Naive thymus-derived CD4-positive, alpha-beta T cell (primary cell): ENCODE measurements at regions of chr19 and their contacts with region 1.

Region 1: GRCh38 chr19:29610563-29611271 is 4.6 kb downstream of the POP4 start:
- DNase-seq: peak; percentile 61 to 85 (median 79)
- ATAC-seq: peak; percentile 82
- H3K4me3 ChIP-seq: no peak overlapping the region
- H3K4me3 Mint-ChIP-seq: peak overlapping the region in 1 of 10 donors; percentile 10
- H3K27ac ChIP-seq: peak overlapping the region; percentile 35
- H3K27ac Mint-ChIP-seq: peak overlapping the region in 8 of 9 donors; percentile 6 to 77 (median 44)
- H3K4me1 ChIP-seq: peaks cover 14 to 16% of the 10 kb centered on the region in 2 donors
- H3K4me1 Mint-ChIP-seq: peaks cover 16 to 39% (median 29%) of the 10 kb centered on the region in 7 donors
- H3K27me3 ChIP-seq: no peaks in the 10 kb centered on the region
- H3K27me3 Mint-ChIP-seq: peaks cover 0 to 4% (median 0%) of the 10 kb centered on the region in 5 donors

Region 2: DNA sequence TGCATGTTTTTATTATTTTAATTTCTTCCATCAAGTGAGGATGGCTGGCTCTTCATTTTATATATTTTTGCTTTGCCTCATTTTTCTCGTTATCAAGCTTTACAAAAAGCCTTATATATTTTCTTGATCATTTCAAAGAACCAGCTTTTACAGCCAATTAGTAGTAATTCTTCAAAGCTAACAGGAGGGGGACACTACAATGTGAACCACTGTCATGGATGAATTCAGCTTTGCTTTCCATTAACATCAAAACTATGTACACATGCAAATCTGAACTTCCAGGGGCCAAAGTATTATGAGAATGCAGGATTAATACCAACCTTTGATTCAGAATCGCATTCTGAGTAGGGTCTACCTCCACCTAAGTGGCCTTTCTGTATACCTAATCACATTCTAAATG is 408.9 kb before region 1 on chr19:
- CTCF ChIA-PET with region 1: no interaction called
- POLR2A ChIA-PET with region 1: no interaction called
- intact Hi-C with region 1: no loop called
- DNase-seq: no peak
- ATAC-seq: no peak
- H3K4me3 ChIP-seq: no peak overlapping the region
- H3K4me3 Mint-ChIP-seq: no peak overlapping the region
- H3K27ac ChIP-seq: no peak overlapping the region
- H3K27ac Mint-ChIP-seq: no peak overlapping the region
- H3K4me1 ChIP-seq: no peaks in the 10 kb centered on the region
- H3K4me1 Mint-ChIP-seq: peaks cover 4 to 26% (median 20%) of the 10 kb centered on the region in 7 donors
- H3K27me3 ChIP-seq: no peaks in the 10 kb centered on the region
- H3K27me3 Mint-ChIP-seq: no peaks in the 10 kb centered on the region

Region 3: DNA sequence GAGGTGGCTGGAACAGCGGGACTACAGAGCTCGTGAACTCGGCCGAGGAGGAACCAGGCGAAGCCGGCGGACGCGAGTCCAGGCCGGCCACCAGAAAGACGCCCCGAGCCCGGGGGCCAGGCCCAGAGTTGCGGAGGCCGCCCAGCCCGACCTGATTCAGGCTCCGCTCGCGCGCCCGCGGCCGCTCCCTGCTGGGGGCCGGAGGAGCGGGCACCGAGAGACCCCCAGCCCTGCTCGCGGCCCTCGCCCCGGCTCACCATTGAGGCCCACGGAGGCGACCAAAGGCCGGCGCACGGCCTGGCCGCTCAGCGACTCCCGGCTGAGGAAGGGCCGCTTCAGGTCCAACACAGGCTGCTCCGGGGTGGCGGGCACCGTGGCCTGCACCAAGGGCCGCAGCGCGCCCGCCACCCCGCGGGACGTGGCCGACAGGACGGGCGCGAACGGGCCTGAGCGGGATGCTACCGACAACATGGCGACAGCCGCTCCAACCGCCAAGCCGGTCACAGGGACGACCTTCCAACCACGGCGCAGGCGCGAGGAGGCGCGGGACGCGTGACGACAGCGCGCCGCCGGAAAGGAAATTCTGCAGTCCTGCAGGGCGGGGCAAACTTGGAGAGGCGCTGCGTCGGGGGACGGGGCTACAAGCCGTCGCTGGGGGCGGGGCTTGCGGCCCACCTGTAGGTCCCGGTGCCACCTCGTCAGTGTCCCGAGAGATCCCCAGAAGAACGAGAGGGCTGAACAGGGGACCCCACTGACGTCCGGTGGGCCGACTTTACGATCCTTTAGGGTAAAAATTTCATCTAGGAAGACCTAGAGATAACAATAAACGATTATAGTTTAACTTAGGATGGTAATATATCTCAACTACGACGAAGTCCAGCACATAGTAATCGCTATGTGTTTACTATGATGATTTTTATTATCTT is 397.8 kb before region 1 on chr19 and contains the start of gene UQCRFS1:
- CTCF ChIA-PET with region 1: no interaction called
- POLR2A ChIA-PET with region 1: interaction called, 3 read pairs
- intact Hi-C with region 1: loop called (anchors 1 to 2 kb)
- DNase-seq: peak; percentile 92 to 96 (median 95)
- ATAC-seq: peak; percentile 97
- H3K4me3 ChIP-seq: peak within 1 kb of the TSS; percentile 94
- H3K4me3 Mint-ChIP-seq: peak within 1 kb of the TSS; percentile 89 to 99 (median 96)
- H3K27ac ChIP-seq: peak within 1 kb of the TSS; percentile 96
- H3K27ac Mint-ChIP-seq: peak within 1 kb of the TSS; percentile 88 to 99 (median 98)
- H3K4me1 ChIP-seq: peaks cover 9 to 34% of the 10 kb centered on the region in 2 donors
- H3K4me1 Mint-ChIP-seq: peaks cover 32 to 54% (median 50%) of the 10 kb centered on the region in 7 donors
- H3K27me3 ChIP-seq: no peaks in the 10 kb centered on the region
- H3K27me3 Mint-ChIP-seq: peaks cover 0 to 12% (median 4%) of the 10 kb centered on the region in 5 donors
- total RNA-seq, gene UQCRFS1: 16.1 to 28.3 (median 23.9) TPM

Region 4: DNA sequence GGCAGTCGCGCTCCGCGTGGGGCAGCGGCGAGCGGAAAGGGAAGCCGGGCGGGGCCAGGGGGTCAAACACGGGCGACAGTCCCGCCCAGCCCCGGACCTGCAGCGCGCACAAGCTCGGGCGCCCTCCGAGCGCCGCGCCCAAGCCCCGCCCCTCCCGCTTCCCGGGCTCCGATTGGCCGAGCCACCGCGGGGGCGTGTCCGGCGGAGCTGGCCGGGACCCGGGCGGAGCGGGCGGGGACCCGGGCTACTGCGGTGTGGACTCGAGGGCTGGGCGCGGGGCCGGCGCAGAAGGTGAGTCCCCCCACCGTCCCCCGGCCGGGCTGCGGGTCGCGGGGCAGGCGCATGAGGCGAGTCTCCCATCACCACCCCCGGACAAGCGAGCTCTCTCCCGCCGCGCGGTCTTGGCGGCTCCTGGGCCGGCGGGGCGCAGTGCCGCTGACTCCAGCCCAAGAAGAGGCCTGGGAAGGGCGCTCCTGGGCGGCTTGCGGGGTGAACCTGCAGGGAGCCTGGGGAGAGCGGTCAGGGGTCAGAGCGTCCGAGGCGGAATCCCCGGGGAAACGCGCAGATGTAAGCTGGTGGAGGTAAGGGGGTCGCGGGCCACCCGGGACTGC is 54.6 kb after region 1 on chr19 and contains the start of gene PLEKHF1:
- CTCF ChIA-PET with region 1: interaction called, 62 read pairs
- POLR2A ChIA-PET with region 1: interaction called, 87 read pairs
- intact Hi-C with region 1: loop called (anchors 1 kb)
- DNase-seq: peak; percentile 66 to 99 (median 79)
- ATAC-seq: peak; percentile 86
- H3K4me3 ChIP-seq: peak within 1 kb of the TSS; percentile 62
- H3K4me3 Mint-ChIP-seq: peak within 1 kb of the TSS; percentile 89 to 98 (median 93)
- H3K27ac ChIP-seq: peak within 1 kb of the TSS; percentile 94
- H3K27ac Mint-ChIP-seq: peak within 1 kb of the TSS; percentile 88 to 100 (median 97)
- H3K4me1 ChIP-seq: peaks cover 33 to 55% of the 10 kb centered on the region in 2 donors
- H3K4me1 Mint-ChIP-seq: peaks cover 36 to 80% (median 71%) of the 10 kb centered on the region in 7 donors
- H3K27me3 ChIP-seq: no peaks in the 10 kb centered on the region
- H3K27me3 Mint-ChIP-seq: no peaks in the 10 kb centered on the region
- total RNA-seq, gene PLEKHF1: 11.1 to 47.2 (median 17.5) TPM

Region 5: GRCh38 chr19:29687244-29687896 is 76.7 kb after region 1 on chr19:
- CTCF ChIA-PET with region 1: interaction called, 115 read pairs
- POLR2A ChIA-PET with region 1: interaction called, 52 read pairs
- intact Hi-C with region 1: loop called (anchors 1 kb)
- DNase-seq: peak in 1 of 9 donors; percentile 63
- ATAC-seq: no peak
- H3K4me3 ChIP-seq: no peak overlapping the region
- H3K4me3 Mint-ChIP-seq: no peak overlapping the region
- H3K27ac ChIP-seq: no peak overlapping the region
- H3K27ac Mint-ChIP-seq: peak overlapping the region in 2 of 9 donors; percentile 9 to 73
- H3K4me1 ChIP-seq: peaks cover 5 to 9% of the 10 kb centered on the region in 2 donors
- H3K4me1 Mint-ChIP-seq: peaks cover 17 to 53% (median 39%) of the 10 kb centered on the region in 7 donors
- H3K27me3 ChIP-seq: no peaks in the 10 kb centered on the region
- H3K27me3 Mint-ChIP-seq: no peaks in the 10 kb centered on the region

Region 6: GRCh38 chr19:29724102-29724641 is 113.5 kb after region 1 on chr19:
- CTCF ChIA-PET with region 1: interaction called, 5 read pairs
- POLR2A ChIA-PET with region 1: interaction called, 15 read pairs
- intact Hi-C with region 1: no loop called
- DNase-seq: peak in 7 of 9 donors; percentile 14 to 42 (median 36)
- ATAC-seq: peak; percentile 66
- H3K4me3 ChIP-seq: peak overlapping the region; percentile 8
- H3K4me3 Mint-ChIP-seq: peak overlapping the region; percentile 75 to 87 (median 84)
- H3K27ac ChIP-seq: no peak overlapping the region
- H3K27ac Mint-ChIP-seq: peak overlapping the region in 6 of 9 donors; percentile 41 to 86 (median 52)
- H3K4me1 ChIP-seq: peaks cover 0 to 9% of the 10 kb centered on the region in 2 donors
- H3K4me1 Mint-ChIP-seq: peaks cover 5 to 20% (median 15%) of the 10 kb centered on the region in 7 donors
- H3K27me3 ChIP-seq: no peaks in the 10 kb centered on the region
- H3K27me3 Mint-ChIP-seq: peaks cover 0 to 61% (median 6%) of the 10 kb centered on the region in 5 donors

Region 7: GRCh38 chr19:29873024-29873800 is 262.5 kb after region 1 on chr19:
- CTCF ChIA-PET with region 1: interaction called, 7 read pairs
- POLR2A ChIA-PET with region 1: interaction called, 3 read pairs
- intact Hi-C with region 1: loop called (anchors 2 to 10 kb)
- DNase-seq: peak; percentile 41 to 84 (median 63)
- ATAC-seq: peak; percentile 82
- H3K4me3 ChIP-seq: peak overlapping the region; percentile 35
- H3K4me3 Mint-ChIP-seq: peak overlapping the region; percentile 55 to 84 (median 76)
- H3K27ac ChIP-seq: peak overlapping the region; percentile 14
- H3K27ac Mint-ChIP-seq: no peak overlapping the region
- H3K4me1 ChIP-seq: no peaks in the 10 kb centered on the region
- H3K4me1 Mint-ChIP-seq: peaks cover 0 to 15% (median 9%) of the 10 kb centered on the region in 7 donors
- H3K27me3 ChIP-seq: no peaks in the 10 kb centered on the region
- H3K27me3 Mint-ChIP-seq: peaks cover 6 to 25% (median 14%) of the 10 kb centered on the region in 5 donors